WTC11 (cell line): ENCODE measurements at regions of chr4 and their contacts with region 1.

Region 1: DNA sequence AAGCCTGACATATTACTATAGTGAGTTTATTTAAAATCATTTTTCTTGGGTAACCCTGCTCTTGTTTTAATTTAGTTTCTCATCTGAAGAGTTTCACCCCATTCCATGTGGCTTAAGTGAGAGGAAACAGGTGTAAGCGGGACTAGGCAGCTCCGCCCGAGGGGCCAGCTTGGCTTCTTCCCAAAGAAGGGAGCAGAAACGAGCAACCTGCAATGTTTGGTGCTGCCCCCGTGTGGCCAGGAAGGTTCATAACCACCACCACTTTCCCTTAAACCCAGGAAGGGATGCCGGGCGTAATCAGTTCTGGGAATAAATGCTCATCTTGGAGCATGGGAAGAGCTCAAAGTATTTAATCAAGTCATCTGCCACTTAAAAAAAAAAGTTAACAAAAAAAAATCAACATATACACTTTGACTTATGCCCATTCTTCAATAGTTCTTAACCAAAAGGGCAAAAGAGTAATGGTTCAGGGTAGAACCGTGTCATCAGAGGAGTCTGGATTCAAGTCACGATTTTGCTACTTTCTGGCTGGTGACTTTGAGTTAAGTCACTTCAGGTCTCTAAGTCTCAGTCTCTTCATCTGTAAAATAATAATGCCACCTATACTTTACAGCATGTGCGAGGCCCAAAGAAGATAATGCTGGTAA is 147.9 kb downstream of the NSUN7 start:
- DNase-seq: peak; percentile 86
- ATAC-seq: peak; percentile 91
- H3K4me3 Mint-ChIP-seq: no peak overlapping the region
- H3K27ac Mint-ChIP-seq: no peak overlapping the region
- H3K4me1 Mint-ChIP-seq: peaks cover 5% of the 10 kb centered on the region
- H3K27me3 Mint-ChIP-seq: no peaks in the 10 kb centered on the region
- CTCF ChIP-seq: peak; percentile 76

Region 2: DNA sequence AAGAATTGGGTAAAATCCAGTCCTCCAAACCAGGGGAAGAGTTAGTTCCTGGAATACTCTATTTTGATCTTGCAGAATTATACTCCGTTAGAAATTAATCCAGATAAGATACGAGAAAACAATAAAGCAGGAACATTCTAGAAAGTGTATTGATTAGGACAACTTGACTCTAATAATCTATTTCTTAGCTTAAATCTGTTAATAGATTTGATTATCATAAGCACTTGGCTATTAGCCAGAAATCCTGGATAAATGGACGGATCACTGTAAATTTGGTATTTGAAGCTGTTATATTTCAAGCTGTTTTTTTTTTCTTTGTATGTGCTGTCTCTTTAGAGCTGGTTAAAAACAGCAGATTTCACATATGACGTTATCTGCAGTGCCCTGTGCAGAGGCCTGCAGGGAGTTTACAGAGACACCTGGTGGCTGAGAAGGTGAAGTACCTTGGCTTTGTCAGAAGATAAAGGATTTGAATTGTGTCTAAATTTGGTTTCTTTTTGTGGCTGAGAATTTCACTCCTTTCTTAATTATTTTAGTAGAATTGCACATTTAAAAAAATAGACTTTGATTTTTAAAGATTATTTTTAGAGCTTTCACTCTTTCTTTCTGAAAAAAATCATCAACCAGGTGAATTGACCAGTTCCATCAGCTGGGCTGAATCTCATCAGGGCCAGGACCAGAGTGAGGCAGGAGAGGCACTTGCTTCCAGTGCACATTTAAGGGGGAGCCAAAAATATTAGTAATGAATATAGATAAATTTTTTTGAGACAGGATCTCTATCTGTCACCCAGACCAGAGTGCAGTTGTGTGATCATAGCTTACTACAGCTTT is 572.3 kb before region 1 on chr4:
- CTCF ChIA-PET with region 1: no interaction called
- POLR2A ChIA-PET with region 1: no interaction called
- DNase-seq: peak; percentile 41
- ATAC-seq: peak; percentile 84
- H3K4me3 Mint-ChIP-seq: no peak overlapping the region
- H3K27ac Mint-ChIP-seq: no peak overlapping the region
- H3K4me1 Mint-ChIP-seq: peaks cover 36% of the 10 kb centered on the region
- H3K27me3 Mint-ChIP-seq: no peaks in the 10 kb centered on the region
- CTCF ChIP-seq: peak; percentile 64

Region 3: GRCh38 chr4:40672536-40673526 is 224.8 kb before region 1 on chr4:
- CTCF ChIA-PET with region 1: no interaction called
- POLR2A ChIA-PET with region 1: no interaction called
- DNase-seq: peak; percentile 26
- ATAC-seq: peak; percentile 80
- H3K4me3 Mint-ChIP-seq: no peak overlapping the region
- H3K27ac Mint-ChIP-seq: peak overlapping the region; percentile 90
- H3K4me1 Mint-ChIP-seq: peaks cover 28% of the 10 kb centered on the region
- H3K27me3 Mint-ChIP-seq: no peaks in the 10 kb centered on the region
- CTCF ChIP-seq: no peak

Region 4: GRCh38 chr4:40840985-40841571 is 56.6 kb before region 1 on chr4:
- CTCF ChIA-PET with region 1: interaction called, 58 read pairs
- POLR2A ChIA-PET with region 1: no interaction called
- DNase-seq: peak; percentile 97
- ATAC-seq: peak; percentile 94
- H3K4me3 Mint-ChIP-seq: peak overlapping the region; percentile 23; the same call in 1 of the 2 replicates
- H3K27ac Mint-ChIP-seq: peak overlapping the region; percentile 82
- H3K4me1 Mint-ChIP-seq: peaks cover 19% of the 10 kb centered on the region
- H3K27me3 Mint-ChIP-seq: no peaks in the 10 kb centered on the region
- CTCF ChIP-seq: peak; percentile 69

Region 5: DNA sequence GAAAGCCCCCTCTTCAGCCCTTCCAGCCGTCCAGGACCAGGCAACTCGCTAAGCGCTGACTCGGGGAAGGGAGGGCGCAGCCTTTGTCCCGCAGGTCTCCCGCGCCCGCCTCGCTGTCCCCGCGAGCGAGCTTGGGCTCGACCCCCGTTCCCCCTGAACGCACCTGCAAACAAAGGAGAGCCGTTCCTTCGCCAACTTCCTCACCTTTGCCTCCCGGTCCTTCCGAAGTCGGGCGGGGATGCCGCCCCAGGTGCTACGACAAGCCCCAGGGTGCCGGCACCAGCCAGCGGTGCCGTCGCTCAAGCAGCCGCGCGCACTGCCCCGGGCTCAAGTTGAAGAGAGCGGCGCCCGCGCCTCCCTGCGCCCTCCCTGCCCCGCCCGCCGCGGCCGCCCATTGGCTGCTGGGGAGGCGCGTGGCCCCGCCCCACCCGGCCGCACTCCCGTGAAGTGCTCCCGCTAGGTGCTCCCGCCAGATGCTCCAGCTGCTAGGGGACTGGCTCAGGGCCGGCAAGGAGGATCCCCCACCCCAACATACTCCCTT is 40.8 kb before region 1 on chr4:
- CTCF ChIA-PET with region 1: interaction called, 11 read pairs
- POLR2A ChIA-PET with region 1: no interaction called
- DNase-seq: peak; percentile 87
- ATAC-seq: peak; percentile 98
- H3K4me3 Mint-ChIP-seq: peak overlapping the region; percentile 85
- H3K27ac Mint-ChIP-seq: no peak overlapping the region
- H3K4me1 Mint-ChIP-seq: peaks cover 13% of the 10 kb centered on the region
- H3K27me3 Mint-ChIP-seq: no peaks in the 10 kb centered on the region
- CTCF ChIP-seq: no peak

Region 6: DNA sequence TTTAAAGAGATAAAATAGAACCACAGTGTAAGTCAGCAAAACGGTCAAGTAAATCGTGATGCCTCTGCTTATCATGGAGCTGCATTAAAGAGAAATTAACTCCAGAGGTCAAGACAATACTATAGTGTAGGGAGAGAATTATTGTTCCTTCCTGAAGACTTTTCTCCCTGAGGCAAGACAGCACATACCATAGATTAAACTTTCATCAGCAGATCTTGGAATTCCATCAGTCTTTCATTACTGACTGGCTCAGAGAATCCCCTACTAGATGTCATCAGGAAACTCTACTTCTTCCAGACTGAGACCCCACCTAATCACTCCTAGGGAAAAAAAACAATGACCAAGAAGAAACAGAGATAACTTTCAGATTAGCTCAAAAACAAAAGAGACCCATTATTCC is 16.6 kb before region 1 on chr4:
- CTCF ChIA-PET with region 1: interaction called, 24 read pairs
- POLR2A ChIA-PET with region 1: interaction called, 3 read pairs
- DNase-seq: no peak
- ATAC-seq: no peak
- H3K4me3 Mint-ChIP-seq: no peak overlapping the region
- H3K27ac Mint-ChIP-seq: peak overlapping the region; percentile 11; the same call in 1 of the 2 replicates
- H3K4me1 Mint-ChIP-seq: no peaks in the 10 kb centered on the region
- H3K27me3 Mint-ChIP-seq: no peaks in the 10 kb centered on the region
- CTCF ChIP-seq: no peak

Region 7: DNA sequence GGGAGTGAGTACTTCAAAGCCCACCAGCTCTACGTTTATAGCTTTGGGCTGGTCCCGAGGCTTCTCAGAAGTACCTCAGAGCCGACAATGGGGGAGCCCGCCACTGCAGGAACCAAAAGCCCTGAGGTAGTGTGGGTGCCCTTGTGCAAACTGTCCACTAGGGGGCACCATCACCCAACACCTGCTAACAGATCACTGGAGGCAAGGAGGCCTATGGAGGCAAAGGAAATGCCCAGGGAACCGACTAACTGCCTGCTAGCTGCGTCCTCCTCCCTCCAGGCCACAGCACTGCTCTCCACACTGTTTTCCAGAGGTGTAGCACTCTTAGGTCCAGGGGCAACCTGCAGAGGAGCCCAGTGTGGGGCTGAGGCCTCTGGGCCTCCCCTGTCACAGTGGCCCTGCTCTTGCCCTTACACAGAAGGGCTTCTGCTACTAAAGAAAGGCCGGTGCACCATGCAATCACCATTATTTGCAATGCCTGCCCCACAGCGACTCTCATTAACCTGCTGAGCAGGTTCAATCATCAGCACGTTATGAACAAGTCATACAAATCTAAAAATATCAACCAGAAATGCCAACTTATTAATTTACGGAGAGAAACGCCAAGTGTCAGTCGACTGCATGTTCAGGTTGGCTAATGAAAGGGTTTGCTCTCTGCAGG is 11.2 kb after region 1 on chr4:
- CTCF ChIA-PET with region 1: interaction called, 43 read pairs
- POLR2A ChIA-PET with region 1: no interaction called
- DNase-seq: peak; percentile 89
- ATAC-seq: peak; percentile 97
- H3K4me3 Mint-ChIP-seq: no peak overlapping the region
- H3K27ac Mint-ChIP-seq: peak overlapping the region; percentile 23
- H3K4me1 Mint-ChIP-seq: peaks cover 11% of the 10 kb centered on the region; the same call in 1 of the 2 replicates
- H3K27me3 Mint-ChIP-seq: no peaks in the 10 kb centered on the region
- CTCF ChIP-seq: peak; percentile 96

Region 8: DNA sequence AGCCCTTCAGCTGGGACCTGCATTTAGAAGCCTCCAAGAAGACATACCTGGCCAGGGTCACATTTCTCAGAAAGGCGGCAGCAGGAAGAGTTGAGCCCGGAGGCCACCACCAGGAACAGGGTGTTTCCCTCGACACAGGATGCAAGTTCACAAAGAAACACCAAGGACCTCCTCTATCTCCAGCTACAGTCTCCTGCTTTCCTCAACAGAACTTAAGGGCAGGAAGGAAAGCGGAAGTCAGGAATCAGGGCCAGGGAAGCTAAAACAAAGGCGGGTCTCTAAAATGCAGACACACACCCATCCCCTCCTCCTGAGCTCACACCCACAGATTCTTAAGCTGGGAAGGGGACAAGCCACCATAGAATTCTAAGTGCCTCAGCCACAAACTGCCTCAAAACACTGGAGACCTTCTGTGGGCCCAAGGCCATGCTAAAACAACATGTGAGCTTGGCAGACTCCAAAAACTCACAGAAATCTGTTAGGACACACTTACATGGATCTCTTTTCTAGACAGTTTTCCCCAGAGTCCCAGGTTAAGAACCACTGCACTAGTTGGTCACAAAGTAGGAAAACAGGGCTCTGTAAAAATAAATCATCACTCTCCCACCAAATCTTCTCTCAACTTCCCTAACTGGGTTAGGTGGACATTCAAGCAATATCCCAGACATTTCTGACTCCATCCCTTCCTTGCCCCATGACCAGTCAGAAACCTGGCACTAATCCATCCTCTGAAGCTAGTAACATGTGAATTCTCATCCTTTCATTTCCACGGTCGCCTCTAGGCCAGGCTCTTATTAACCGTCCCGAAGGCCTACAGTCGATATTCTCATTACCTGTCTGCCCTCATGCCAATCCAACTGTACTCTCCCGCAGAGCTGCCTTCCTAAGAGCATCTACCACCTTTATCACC is 153.4 kb after region 1 on chr4:
- CTCF ChIA-PET with region 1: no interaction called
- POLR2A ChIA-PET with region 1: no interaction called
- DNase-seq: no peak
- ATAC-seq: peak; percentile 39; the same call in 1 of the 2 replicates
- H3K4me3 Mint-ChIP-seq: no peak overlapping the region
- H3K27ac Mint-ChIP-seq: peak overlapping the region; percentile 20
- H3K4me1 Mint-ChIP-seq: peaks cover 13% of the 10 kb centered on the region
- H3K27me3 Mint-ChIP-seq: no peaks in the 10 kb centered on the region
- CTCF ChIP-seq: no peak

Region 9: GRCh38 chr4:41532882-41533281 is 635.2 kb after region 1 on chr4:
- CTCF ChIA-PET with region 1: no interaction called
- POLR2A ChIA-PET with region 1: no interaction called
- DNase-seq: no peak
- ATAC-seq: no peak
- H3K4me3 Mint-ChIP-seq: no peak overlapping the region
- H3K27ac Mint-ChIP-seq: no peak overlapping the region
- H3K4me1 Mint-ChIP-seq: no peaks in the 10 kb centered on the region; the same call in 1 of the 2 replicates
- H3K27me3 Mint-ChIP-seq: no peaks in the 10 kb centered on the region
- CTCF ChIP-seq: no peak